ENCODE measurements at regions of chr11 and their contacts with region 1.

Region 1: GRCh38 chr11:67095214-67095507 is 23.9 kb upstream of the KDM2A start:
- DNase-seq: no peak

Region 2: DNA sequence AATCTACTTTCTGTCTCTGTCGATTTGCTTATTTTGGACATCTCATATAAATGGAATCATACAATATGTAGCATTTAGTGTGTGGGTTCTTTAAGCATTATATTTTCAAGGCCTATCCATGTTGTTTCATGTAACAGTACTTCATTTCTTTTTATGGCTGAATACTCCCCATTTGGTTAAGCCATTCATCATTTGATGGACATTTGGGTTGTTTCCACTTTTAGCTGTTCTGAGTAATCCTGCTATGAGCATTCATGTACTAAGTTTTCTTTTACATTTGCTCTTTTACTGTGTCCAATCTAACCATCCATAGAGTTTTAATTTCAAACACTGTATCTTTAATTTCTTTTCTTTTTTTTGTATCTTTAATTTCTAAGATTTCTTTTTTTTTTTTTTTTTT is 310.6 kb before region 1 on chr11:
- intact Hi-C with region 1: no loop called
- DNase-seq: no peak

Region 3: DNA sequence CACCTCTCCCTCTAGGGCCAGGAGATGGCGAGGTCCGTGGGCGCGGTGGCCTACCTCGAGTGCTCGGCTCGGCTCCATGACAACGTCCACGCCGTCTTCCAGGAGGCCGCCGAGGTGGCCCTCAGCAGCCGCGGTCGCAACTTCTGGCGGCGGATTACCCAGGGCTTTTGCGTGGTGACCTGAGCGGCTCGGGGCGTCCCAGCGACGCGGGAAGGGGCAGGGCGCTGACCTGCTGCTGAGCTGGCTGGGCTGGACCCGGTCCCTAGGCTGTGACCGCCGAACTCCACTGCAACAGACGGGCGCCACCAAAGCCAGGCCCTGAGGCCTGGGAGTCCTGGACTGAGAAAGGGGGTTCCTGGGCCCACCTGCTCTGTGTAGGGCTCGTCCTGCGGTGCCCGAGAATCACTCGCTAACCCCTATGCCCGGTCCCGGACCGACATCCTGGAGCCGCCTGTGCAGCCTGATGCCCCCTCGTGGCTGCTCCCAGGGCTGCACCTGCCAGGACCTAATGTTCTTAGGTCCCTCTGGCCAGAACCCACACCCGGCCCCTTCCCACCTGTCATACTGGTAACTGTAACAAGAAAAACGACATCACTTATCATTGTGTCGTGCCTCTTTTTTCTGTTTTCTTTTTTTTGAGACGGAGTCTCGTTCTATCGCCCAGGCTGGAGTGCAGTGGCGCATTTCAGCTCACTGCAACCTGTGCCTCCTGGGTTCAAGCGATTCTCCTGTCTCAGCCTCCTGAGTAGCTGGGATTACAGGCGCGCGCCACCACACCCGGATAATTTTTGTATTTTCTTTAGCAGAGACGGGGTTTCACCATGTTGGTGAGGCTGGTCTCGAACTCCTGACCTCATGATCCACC is 23.5 kb before region 1 on chr11:
- intact Hi-C with region 1: loop called in 1 of 2 experiments (anchors 1 kb)
- DNase-seq: peak; percentile 93

Measured in posterior vena cava (tissue), 2 donors.